PC-9 (cell line): ENCODE measurements at regions of chr7 and their contacts with region 1.

Region 1: GRCh38 chr7:158704704-158705468 is at the start of gene NCAPG2:
- DNase-seq: peak; percentile 97 to 99
- H3K4me3 ChIP-seq: peak within 1 kb of the TSS; percentile 70
- H3K27ac ChIP-seq: peak within 1 kb of the TSS; percentile 50
- H3K4me1 ChIP-seq: peaks cover 33% of the 10 kb centered on the region
- H3K27me3 ChIP-seq: no peaks in the 10 kb centered on the region
- CTCF ChIP-seq: no peak; the same call in 1 of the 2 replicates
- total RNA-seq, gene NCAPG2: 99.5 and 124 TPM in 2 replicates

Region 2: GRCh38 chr7:158662610-158663427 is 42.1 kb before region 1 on chr7:
- CTCF ChIA-PET with region 1: no interaction called
- POLR2A ChIA-PET with region 1: no interaction called
- intact Hi-C with region 1: no loop called
- DNase-seq: no peak
- H3K4me3 ChIP-seq: no peak overlapping the region
- H3K27ac ChIP-seq: no peak overlapping the region
- H3K4me1 ChIP-seq: no peaks in the 10 kb centered on the region
- H3K27me3 ChIP-seq: no peaks in the 10 kb centered on the region
- CTCF ChIP-seq: no peak

Region 3: GRCh38 chr7:158740013-158740656 is 35.2 kb after region 1 on chr7:
- CTCF ChIA-PET with region 1: no interaction called
- POLR2A ChIA-PET with region 1: interaction called, 3 read pairs
- intact Hi-C with region 1: loop called (anchors 1 kb)
- DNase-seq: peak; percentile 81 to 96
- H3K4me3 ChIP-seq: peak overlapping the region; percentile 8; the same call in 1 of the 2 replicates
- H3K27ac ChIP-seq: peak overlapping the region; percentile 84
- H3K4me1 ChIP-seq: peaks cover 41% of the 10 kb centered on the region
- H3K27me3 ChIP-seq: no peaks in the 10 kb centered on the region
- CTCF ChIP-seq: 0 out of 2 replicates have a peak, but pooled peaks have one; percentile 12